Activated CD8-positive, alpha-beta memory T cell treated with anti-CD3 and anti-CD28 coated beads, Interleukin-2, amount 10 ng/mL, durations not matched to agents 7 days and 5 days (primary cell): ENCODE measurements at regions of chr3 and their contacts with region 1.

Region 1: DNA sequence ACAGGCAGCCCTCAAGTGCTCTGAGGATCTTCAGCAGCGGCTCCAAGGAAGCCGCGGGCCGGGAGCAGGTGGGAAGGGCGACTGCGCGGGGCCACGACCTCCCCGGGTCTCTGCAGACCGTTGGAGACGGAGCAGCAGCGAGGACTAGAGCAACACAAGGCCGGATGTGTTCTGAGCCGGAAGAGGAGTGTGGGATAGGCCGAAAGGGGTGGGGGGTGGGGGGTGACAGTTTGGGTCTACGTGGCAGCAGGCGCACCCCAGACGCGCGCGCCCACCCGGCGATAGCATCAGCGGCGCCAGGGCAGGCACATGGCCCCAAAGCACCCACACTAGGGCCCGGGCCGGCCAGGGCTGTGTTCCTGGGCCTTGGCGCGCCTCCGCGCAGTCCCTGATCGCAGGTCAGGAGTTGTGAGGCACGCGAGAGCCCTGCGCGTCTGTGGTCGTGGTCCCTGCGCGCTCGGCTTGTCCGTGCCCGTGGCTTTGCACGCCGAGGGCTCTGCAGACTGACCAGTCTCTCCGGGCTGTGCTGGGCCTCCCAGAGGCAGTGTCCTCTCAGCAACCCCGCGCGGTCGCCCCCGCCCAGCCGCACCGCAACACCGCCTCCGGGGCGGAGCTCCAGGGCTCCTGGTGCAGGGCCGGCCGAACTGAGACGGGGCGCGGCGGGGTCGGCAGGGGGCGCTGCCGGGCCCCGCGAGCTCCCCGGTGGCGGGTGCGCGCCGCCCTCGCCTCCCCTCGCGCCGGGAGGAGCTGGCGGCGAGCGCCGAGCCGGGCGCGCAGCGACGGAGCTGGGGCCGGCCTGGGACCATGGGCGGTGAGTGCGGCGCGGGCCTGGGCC is at the start of gene PXYLP1:
- DNase-seq: peak; percentile 95
- ATAC-seq: peak; percentile 95
- H3K4me3 Mint-ChIP-seq: peak within 1 kb of the TSS; percentile 73
- H3K27ac Mint-ChIP-seq: peak within 1 kb of the TSS; percentile 98
- H3K4me1 Mint-ChIP-seq: peaks cover 55% of the 10 kb centered on the region
- H3K27me3 Mint-ChIP-seq: no peaks in the 10 kb centered on the region
- total RNA-seq, gene PXYLP1: 10.3 to 18.4 TPM

Region 2: GRCh38 chr3:141243271-141243707 is 12.0 kb after region 1 on chr3:
- CTCF ChIA-PET with region 1: interaction called, 64 read pairs
- DNase-seq: peak; percentile 78
- ATAC-seq: peak; percentile 99
- H3K4me3 Mint-ChIP-seq: peak overlapping the region; percentile 21
- H3K27ac Mint-ChIP-seq: peak overlapping the region; percentile 70
- H3K4me1 Mint-ChIP-seq: peaks cover 42% of the 10 kb centered on the region
- H3K27me3 Mint-ChIP-seq: no peaks in the 10 kb centered on the region

Region 3: DNA sequence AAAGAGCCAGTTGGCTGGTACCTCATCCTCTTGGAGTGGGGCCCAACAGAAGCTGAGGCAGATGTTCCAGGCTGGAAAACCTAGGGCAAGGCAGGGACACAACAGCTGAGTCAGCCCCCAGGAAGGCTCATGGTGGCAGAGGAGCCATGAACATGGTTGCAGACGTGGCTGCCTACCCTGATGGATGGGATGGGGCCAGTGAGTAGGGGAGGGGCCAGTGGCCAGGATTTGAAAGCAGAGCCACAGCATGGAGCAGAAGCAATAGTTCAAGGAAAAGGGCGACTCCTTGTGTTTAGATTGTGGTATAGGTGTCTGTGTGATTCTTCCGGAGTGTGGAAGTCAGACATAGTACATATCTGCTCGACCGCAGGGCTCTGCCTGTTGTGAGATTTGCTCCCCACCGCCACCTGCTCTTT is 24.5 kb after region 1 on chr3:
- CTCF ChIA-PET with region 1: interaction called, 76 read pairs
- DNase-seq: peak; percentile 45
- ATAC-seq: peak; percentile 87
- H3K4me3 Mint-ChIP-seq: no peak overlapping the region
- H3K27ac Mint-ChIP-seq: no peak overlapping the region
- H3K4me1 Mint-ChIP-seq: peaks cover 28% of the 10 kb centered on the region
- H3K27me3 Mint-ChIP-seq: no peaks in the 10 kb centered on the region

Region 4: DNA sequence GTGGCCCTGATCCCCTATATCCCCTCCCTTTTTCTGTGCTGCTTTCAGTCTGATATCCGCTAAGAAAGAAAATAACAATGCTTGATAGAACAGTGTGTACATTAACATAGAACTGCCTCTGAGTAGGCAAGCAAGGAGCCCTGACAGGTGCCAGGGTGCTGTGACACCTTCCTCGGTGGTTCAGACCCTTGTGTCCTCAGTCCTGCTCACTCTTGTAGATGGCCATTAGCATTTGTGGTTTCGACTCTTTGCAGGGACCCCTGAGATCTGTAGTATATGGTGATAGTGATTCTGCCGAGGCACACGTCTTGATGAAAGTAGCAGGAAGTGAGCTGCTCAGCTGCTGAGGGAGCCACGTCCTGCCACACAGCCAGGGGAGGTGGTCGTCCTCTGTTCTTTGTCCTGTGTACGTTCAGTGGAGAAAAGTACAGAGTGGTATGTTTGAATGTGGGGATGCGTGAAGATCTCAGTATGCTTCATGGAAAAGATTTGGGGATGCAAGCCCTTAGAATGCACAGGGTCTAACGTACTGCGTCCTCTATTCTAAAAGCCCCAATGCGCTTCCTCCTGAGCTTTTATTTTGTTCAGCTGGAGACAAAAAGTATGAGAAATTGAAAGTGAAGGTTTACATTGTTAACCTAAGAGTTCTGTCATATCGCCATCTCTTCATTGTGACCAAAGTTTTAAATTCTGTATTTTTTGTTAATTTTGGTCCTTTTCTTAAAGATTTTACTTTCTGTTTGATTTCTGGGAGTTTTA is 35.7 kb after region 1 on chr3:
- CTCF ChIA-PET with region 1: interaction called, 77 read pairs
- DNase-seq: peak; percentile 75
- ATAC-seq: peak; percentile 90
- H3K4me3 Mint-ChIP-seq: peak overlapping the region; percentile 77
- H3K27ac Mint-ChIP-seq: peak overlapping the region; percentile 93
- H3K4me1 Mint-ChIP-seq: peaks cover 26% of the 10 kb centered on the region
- H3K27me3 Mint-ChIP-seq: no peaks in the 10 kb centered on the region

Region 5: GRCh38 chr3:141279077-141279967 is 48.0 kb after region 1 on chr3:
- CTCF ChIA-PET with region 1: interaction called, 43 read pairs
- DNase-seq: no peak
- ATAC-seq: peak; percentile 59
- H3K4me3 Mint-ChIP-seq: no peak overlapping the region
- H3K27ac Mint-ChIP-seq: peak overlapping the region; percentile 26
- H3K4me1 Mint-ChIP-seq: peaks cover 27% of the 10 kb centered on the region
- H3K27me3 Mint-ChIP-seq: no peaks in the 10 kb centered on the region

Region 6: GRCh38 chr3:141303481-141304223 is 72.3 kb after region 1 on chr3:
- CTCF ChIA-PET with region 1: interaction called, 37 read pairs
- DNase-seq: peak; percentile 73
- ATAC-seq: peak; percentile 73
- H3K4me3 Mint-ChIP-seq: no peak overlapping the region
- H3K27ac Mint-ChIP-seq: no peak overlapping the region
- H3K4me1 Mint-ChIP-seq: peaks cover 23% of the 10 kb centered on the region
- H3K27me3 Mint-ChIP-seq: no peaks in the 10 kb centered on the region

Region 7: GRCh38 chr3:141336672-141337522 is 105.6 kb after region 1 on chr3:
- CTCF ChIA-PET with region 1: no interaction called
- DNase-seq: no peak
- ATAC-seq: no peak
- H3K4me3 Mint-ChIP-seq: no peak overlapping the region
- H3K27ac Mint-ChIP-seq: no peak overlapping the region
- H3K4me1 Mint-ChIP-seq: peaks cover 5% of the 10 kb centered on the region
- H3K27me3 Mint-ChIP-seq: peaks cover 7% of the 10 kb centered on the region